K562 (cell line): ENCODE measurements at regions of chr2 and their contacts with region 1.

Region 1: GRCh38 chr2:11129598-11130449 is 25.4 kb upstream of the SLC66A3 start:
- DNase-seq: peak; percentile 85 to 94 (median 90)
- ATAC-seq: peak; percentile 94
- H3K4me3 ChIP-seq: peak overlapping the region; percentile 48
- H3K27ac ChIP-seq: no peak overlapping the region
- H3K4me1 ChIP-seq: peaks cover 16 to 24% of the 10 kb centered on the region in 2 experiments; a peak in 4 of 5 replicates
- H3K27me3 ChIP-seq: peaks cover 3 to 29% of the 10 kb centered on the region in 2 experiments; a peak in 3 of 5 replicates
- CTCF ChIP-seq: peak; percentile 56 to 74 (median 71)
- EP300 ChIP-seq: no peak
- POLR2A ChIP-seq: no peak
- RAD21 ChIP-seq: peak; percentile 66 to 78

Region 2: GRCh38 chr2:11118761-11119160 is 11.1 kb before region 1 on chr2:
- CTCF ChIA-PET with region 1: no interaction called
- POLR2A ChIA-PET with region 1: no interaction called
- in situ Hi-C with region 1: no loop called
- intact Hi-C with region 1: no loop called
- DNase-seq: no peak
- ATAC-seq: no peak
- H3K4me3 ChIP-seq: no peak overlapping the region
- H3K27ac ChIP-seq: no peak overlapping the region; the same call in 2 of the 3 replicates
- H3K4me1 ChIP-seq: peaks cover 5% of the 10 kb centered on the region in 2 experiments; a peak in 3 of 5 replicates
- H3K27me3 ChIP-seq: peaks cover 7 to 43% of the 10 kb centered on the region in 2 experiments; a peak in 4 of 5 replicates
- CTCF ChIP-seq: no peak
- EP300 ChIP-seq: no peak
- POLR2A ChIP-seq: no peak
- RAD21 ChIP-seq: no peak

Region 3: DNA sequence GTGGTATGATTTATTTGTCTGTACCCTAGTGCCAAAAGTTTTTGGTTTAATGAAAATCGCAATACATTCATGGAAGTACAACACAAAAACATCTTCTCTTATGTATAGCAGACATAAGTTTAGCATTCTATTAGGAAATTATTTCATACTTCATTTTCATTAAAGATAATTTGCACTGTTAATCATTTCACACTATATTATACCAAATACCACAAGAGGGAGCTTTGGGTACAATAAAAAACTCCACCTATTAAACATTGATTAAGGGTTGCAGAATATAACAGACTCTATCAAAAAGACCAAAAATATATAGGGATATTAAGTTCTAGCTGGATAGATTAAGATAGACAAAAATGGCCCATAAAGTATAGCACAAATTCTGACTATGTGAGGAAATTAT is 104.5 kb after region 1 on chr2:
- CTCF ChIA-PET with region 1: no interaction called
- POLR2A ChIA-PET with region 1: no interaction called
- in situ Hi-C with region 1: no loop called
- intact Hi-C with region 1: loop called (anchors 10 kb)
- DNase-seq: no peak
- ATAC-seq: no peak
- H3K4me3 ChIP-seq: no peak overlapping the region
- H3K27ac ChIP-seq: no peak overlapping the region
- H3K4me1 ChIP-seq: no peaks in the 10 kb centered on the region; a peak in 1 of 5 replicates
- H3K27me3 ChIP-seq: no peaks in the 10 kb centered on the region
- CTCF ChIP-seq: peak in 2 of 3 experiments; percentile 8 to 57; a peak in 3 of 6 replicates
- EP300 ChIP-seq: no peak
- POLR2A ChIP-seq: no peak
- RAD21 ChIP-seq: peak; percentile 64 to 75

Region 4: GRCh38 chr2:11446733-11447248 is 317.0 kb after region 1 on chr2:
- CTCF ChIA-PET with region 1: interaction called, 16 read pairs
- POLR2A ChIA-PET with region 1: no interaction called
- in situ Hi-C with region 1: no loop called
- intact Hi-C with region 1: loop called (anchors 1 kb)
- DNase-seq: peak; percentile 40 to 62 (median 57)
- ATAC-seq: peak; percentile 88
- H3K4me3 ChIP-seq: no peak overlapping the region
- H3K27ac ChIP-seq: no peak overlapping the region
- H3K4me1 ChIP-seq: no peaks in the 10 kb centered on the region
- H3K27me3 ChIP-seq: no peaks in the 10 kb centered on the region
- CTCF ChIP-seq: peak; percentile 59 to 80 (median 67)
- EP300 ChIP-seq: no peak
- POLR2A ChIP-seq: no peak
- RAD21 ChIP-seq: peak; percentile 37 to 58

Region 5: GRCh38 chr2:11681722-11682589 is 552.1 kb after region 1 on chr2:
- CTCF ChIA-PET with region 1: interaction called, 5 read pairs
- POLR2A ChIA-PET with region 1: no interaction called
- in situ Hi-C with region 1: no loop called
- intact Hi-C with region 1: loop called (anchors 5 kb)
- DNase-seq: peak; percentile 71 to 91 (median 89)
- ATAC-seq: peak; percentile 93
- H3K4me3 ChIP-seq: no peak overlapping the region
- H3K27ac ChIP-seq: no peak overlapping the region
- H3K4me1 ChIP-seq: peaks cover 0 to 7% of the 10 kb centered on the region in 2 experiments; a peak in 2 of 5 replicates
- H3K27me3 ChIP-seq: peaks cover 26 to 80% of the 10 kb centered on the region in 2 experiments; a peak in 3 of 5 replicates
- CTCF ChIP-seq: peak; percentile 92 to 97 (median 92)
- EP300 ChIP-seq: no peak
- POLR2A ChIP-seq: no peak
- RAD21 ChIP-seq: peak; percentile 73 to 87